IMR-90 (cell line): ENCODE measurements at regions of chr6 and their contacts with region 1.

Region 1: GRCh38 chr6:38001386-38001785 is 181.9 kb downstream of the ZFAND3 start:
- DNase-seq: peak; percentile 28
- ATAC-seq: peak; percentile 59
- H3K4me3 ChIP-seq: no peak overlapping the region
- H3K27ac ChIP-seq: no peak overlapping the region
- H3K4me1 ChIP-seq: no peaks in the 10 kb centered on the region; the same call in 1 of the 2 replicates
- H3K27me3 ChIP-seq: no peaks in the 10 kb centered on the region
- CTCF ChIP-seq: no peak
- POLR2A ChIP-seq: no peak
- RAD21 ChIP-seq: no peak

Region 2: DNA sequence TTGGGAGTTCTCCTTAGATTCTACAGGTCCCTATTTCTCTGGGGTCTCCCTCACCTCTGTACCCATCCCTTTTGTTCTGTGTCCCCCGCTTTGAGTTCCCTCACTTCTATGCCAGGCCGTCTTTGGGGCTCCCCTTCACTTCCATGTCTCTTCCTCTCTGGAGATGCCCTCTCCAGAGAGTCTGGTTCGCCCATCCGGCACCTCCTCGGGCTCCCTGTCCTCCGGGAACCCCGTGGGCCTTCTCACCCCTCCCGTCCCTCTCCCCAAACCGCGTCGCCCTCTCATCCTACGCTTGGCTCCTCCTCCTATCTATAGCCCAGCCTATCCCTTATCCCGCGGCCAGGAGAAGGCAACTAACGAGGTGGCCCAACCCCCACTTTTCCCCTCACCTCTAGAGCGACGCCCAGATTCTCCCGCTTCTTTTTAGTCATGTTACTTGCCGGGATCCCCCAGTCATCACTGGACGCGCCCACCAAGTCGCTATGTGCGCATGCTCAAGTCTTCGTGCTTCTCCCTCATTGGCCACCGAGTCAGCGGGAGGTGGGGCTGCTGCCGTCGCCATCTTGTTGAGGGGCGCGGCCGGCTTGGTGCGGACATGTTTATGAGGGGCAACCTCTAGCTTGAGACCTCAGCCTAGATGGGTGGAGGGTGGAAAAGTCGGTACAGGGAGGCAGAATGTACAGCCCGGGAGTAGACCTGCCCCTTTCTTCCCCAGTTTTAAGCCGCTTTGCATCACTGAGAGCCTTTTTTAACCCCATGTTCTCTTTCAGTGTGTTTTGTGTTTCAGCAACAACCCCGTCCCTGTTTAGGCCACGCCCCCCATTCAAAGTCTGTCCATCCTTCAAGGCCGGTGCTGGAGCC is 501.7 kb before region 1 on chr6 and contains the start of gene CCDC167:
- CTCF ChIA-PET with region 1: no interaction called
- POLR2A ChIA-PET with region 1: no interaction called
- dilution Hi-C with region 1: no loop called
- in situ Hi-C with region 1: no loop called
- intact Hi-C with region 1: loop called (anchors 10 kb)
- DNase-seq: peak; percentile 96
- ATAC-seq: peak; percentile 99
- H3K4me3 ChIP-seq: peak within 1 kb of the TSS; percentile 75
- H3K27ac ChIP-seq: peak within 1 kb of the TSS; percentile 59
- H3K4me1 ChIP-seq: no peaks in the 10 kb centered on the region
- H3K27me3 ChIP-seq: peaks cover 15% of the 10 kb centered on the region
- CTCF ChIP-seq: no peak
- POLR2A ChIP-seq: peak; percentile 47; the same call in 1 of the 2 replicates
- RAD21 ChIP-seq: 0 out of 2 replicates have a peak, but pooled peaks have one; percentile 8
- total RNA-seq, gene CCDC167: 35.8 and 59.4 TPM in 2 replicates

Region 3: DNA sequence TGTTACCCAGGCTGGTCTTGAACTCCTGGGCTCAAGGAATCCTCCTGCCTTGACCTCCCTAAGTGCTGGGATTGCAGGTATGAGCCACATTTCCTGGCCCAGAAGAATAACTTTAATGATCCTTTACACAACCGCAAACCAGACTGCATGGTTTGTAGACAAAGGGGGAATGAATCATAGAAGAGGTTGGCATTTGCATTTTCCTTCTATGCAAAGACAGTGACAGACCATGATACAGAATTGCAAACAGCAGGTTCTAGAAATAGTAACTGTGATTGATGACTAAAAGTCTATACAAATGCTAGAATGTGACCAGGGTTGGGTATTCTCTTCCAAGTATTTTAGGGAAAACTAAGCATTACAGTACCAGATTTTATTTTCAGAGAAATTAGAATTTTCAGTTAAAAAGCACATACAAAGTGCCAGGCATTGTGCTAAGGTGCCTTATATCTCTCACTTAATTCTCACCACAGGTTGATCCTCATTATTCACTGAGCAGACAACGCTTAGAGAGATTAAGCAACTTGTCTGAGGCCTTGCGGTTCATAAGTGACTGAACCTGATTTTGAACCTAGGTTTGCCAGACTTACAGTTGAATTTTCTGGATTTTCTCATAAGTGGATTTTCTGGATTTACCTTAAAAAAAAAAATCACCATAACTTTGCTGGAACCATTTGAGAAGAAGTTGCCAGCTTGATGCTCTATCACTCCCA is 35.3 kb before region 1 on chr6:
- CTCF ChIA-PET with region 1: no interaction called
- POLR2A ChIA-PET with region 1: no interaction called
- dilution Hi-C with region 1: no loop called
- in situ Hi-C with region 1: no loop called
- intact Hi-C with region 1: no loop called
- DNase-seq: peak; percentile 48
- ATAC-seq: no peak
- H3K4me3 ChIP-seq: no peak overlapping the region
- H3K27ac ChIP-seq: no peak overlapping the region
- H3K4me1 ChIP-seq: peaks cover 2% of the 10 kb centered on the region
- H3K27me3 ChIP-seq: no peaks in the 10 kb centered on the region
- CTCF ChIP-seq: no peak
- POLR2A ChIP-seq: no peak
- RAD21 ChIP-seq: no peak

Region 4: DNA sequence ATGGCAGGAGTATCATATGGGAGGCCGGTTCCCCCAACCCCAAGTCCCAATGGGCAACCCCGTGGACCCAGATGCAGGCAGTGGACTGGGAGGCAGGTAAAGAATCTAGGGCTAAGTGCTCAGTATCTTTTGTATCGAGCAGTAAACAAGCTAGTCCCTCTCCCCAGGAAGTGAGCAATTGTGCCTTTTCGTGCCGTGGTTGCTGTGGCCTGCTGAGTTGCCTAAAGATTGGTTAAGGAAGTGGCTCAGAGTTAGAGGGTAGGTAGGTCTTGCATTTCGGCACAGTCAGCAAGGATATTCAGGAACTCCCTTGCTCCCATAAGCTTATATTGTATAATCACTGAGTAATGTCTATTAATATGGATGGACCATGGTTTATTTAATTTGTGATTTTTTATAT is 712.4 kb after region 1 on chr6:
- CTCF ChIA-PET with region 1: no interaction called
- POLR2A ChIA-PET with region 1: no interaction called
- dilution Hi-C with region 1: no loop called
- in situ Hi-C with region 1: no loop called
- intact Hi-C with region 1: no loop called
- DNase-seq: no peak
- ATAC-seq: no peak
- H3K4me3 ChIP-seq: no peak overlapping the region
- H3K27ac ChIP-seq: no peak overlapping the region
- H3K4me1 ChIP-seq: no peaks in the 10 kb centered on the region
- H3K27me3 ChIP-seq: peaks cover 25% of the 10 kb centered on the region
- CTCF ChIP-seq: no peak
- POLR2A ChIP-seq: no peak
- RAD21 ChIP-seq: no peak